ENCODE measurements at regions of chr7 and their contacts with region 1.

Region 1: GRCh38 chr7:143008007-143008901 is 18.7 kb downstream of the OR9A2 start:
- DNase-seq: peak; percentile 49 to 84
- H3K4me3 ChIP-seq: no peak overlapping the region
- H3K4me1 ChIP-seq: no peaks in the 10 kb centered on the region
- H3K27me3 ChIP-seq: peaks cover 3% of the 10 kb centered on the region; the same call in 1 of the 2 replicates

Region 2: DNA sequence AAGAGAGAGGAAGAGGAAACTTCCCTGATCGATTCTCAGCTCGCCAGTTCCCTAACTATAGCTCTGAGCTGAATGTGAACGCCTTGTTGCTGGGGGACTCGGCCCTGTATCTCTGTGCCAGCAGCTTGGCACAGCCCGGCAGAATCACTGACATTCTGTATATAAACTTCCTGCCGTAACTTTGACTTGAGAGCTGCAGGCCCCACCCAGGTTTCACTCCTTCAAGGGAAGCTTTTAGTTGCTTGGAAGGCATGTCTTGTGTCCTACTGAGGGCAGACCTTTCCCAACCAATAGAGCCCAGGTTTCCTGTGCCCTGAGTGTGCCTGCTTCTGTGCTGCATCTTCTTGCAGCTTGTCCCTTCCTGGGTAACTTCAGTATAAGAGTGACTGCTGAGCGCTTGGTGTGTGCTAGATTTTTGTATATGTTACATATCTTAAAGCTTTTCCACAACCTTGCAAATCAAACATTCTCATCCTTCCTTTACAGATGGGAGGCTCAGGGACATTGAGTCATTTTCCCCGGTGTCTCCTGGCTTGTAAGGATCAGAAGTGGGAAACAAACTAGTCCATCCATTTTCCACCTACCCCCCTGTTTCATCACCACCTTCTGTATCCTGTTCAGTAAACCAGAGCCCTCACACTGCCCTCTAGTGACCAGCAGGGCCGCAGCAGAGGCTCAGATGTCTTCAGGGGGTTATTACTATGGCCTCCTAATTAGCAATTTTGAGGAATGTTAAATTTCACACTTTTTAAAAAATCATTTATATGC is 525.2 kb before region 1 on chr7:
- in situ Hi-C with region 1: no loop called
- DNase-seq: peak; percentile 26 to 60
- H3K4me3 ChIP-seq: no peak overlapping the region
- H3K4me1 ChIP-seq: no peaks in the 10 kb centered on the region
- H3K27me3 ChIP-seq: no peaks in the 10 kb centered on the region

Region 3: DNA sequence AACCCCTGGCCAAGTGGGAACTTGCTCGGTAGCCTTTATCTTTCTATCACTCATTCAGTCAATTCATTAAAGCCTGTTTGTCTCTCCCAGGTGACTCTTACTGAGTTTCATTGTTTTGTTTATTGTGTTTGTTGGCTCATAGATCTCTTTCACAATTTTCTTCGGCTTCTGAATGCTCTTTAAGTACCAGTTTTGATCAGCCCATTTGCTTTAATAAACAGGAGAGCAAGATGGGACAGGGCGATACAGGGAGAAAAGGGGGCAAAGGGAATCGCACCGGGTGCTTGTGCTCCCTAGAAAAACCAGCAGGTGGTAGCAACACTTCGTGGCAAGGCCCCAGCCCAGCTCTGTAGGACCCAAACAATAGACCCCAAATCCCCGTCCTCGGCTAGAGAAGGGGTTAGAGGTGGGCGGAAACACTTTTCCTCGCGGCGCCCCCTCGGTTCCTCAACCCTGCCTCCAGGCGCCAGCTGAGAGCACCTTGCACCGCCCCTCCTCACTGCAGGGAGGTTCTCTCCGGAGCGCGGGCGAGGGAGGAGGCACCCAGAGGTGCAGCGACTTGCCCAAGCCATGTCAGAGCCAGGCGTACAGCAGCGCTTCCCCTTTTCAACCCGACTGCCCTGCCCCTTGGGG is 154.4 kb before region 1 on chr7:
- in situ Hi-C with region 1: loop called (anchors 10 kb)
- DNase-seq: peak; percentile 76 to 81
- H3K4me3 ChIP-seq: peak overlapping the region; percentile 42
- H3K4me1 ChIP-seq: no peaks in the 10 kb centered on the region
- H3K27me3 ChIP-seq: peaks cover 8% of the 10 kb centered on the region